ENCODE measurements at regions of chr2 and their contacts with region 1.

Region 1: GRCh38 chr2:39948016-39948719 is 169.1 kb upstream of the THUMPD2 start:
- DNase-seq: no peak
- ATAC-seq: peak; percentile 63
- H3K4me3 Mint-ChIP-seq: peak overlapping the region; percentile 0
- H3K27ac Mint-ChIP-seq: peak overlapping the region; percentile 91
- H3K4me1 Mint-ChIP-seq: peaks cover 49% of the 10 kb centered on the region
- H3K27me3 Mint-ChIP-seq: peaks cover 3% of the 10 kb centered on the region

Region 2: DNA sequence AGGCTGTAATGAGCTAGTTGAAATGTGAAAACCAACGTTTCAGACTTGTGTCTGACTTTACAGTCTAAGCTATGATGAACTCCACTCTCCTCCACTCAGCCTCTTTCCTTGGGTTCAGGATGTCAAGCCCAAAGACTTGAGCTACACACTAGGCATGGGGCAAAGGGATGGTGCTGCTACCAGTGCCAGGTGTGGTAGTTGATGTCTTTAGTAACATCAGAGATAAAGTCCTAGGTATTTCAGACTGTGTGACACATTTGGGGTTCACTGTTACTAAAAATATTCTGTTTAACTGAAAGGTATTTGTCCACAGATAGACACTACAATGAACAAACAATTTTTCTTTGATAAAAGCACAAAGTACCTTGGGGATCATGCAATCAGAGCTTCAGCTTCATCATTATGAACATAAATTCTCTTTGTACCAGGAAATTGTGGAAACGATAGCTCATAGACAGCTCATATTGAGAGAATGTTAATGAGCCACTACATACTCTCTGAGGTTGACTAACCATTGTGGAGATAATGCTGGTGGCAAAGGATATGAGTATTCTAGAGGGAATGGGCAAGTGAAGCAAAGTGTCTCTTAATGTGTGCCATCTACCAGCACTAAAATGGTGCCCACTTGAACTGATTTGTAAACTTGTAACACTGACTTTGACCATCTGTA is 84.6 kb after region 1 on chr2:
- CTCF ChIA-PET with region 1: no interaction called
- POLR2A ChIA-PET with region 1: no interaction called
- intact Hi-C with region 1: loop called (anchors 5 kb)
- DNase-seq: no peak
- ATAC-seq: peak; percentile 92
- H3K4me3 Mint-ChIP-seq: no peak overlapping the region
- H3K27ac Mint-ChIP-seq: peak overlapping the region; percentile 74
- H3K4me1 Mint-ChIP-seq: peaks cover 22% of the 10 kb centered on the region
- H3K27me3 Mint-ChIP-seq: peaks cover 2% of the 10 kb centered on the region

Region 3: DNA sequence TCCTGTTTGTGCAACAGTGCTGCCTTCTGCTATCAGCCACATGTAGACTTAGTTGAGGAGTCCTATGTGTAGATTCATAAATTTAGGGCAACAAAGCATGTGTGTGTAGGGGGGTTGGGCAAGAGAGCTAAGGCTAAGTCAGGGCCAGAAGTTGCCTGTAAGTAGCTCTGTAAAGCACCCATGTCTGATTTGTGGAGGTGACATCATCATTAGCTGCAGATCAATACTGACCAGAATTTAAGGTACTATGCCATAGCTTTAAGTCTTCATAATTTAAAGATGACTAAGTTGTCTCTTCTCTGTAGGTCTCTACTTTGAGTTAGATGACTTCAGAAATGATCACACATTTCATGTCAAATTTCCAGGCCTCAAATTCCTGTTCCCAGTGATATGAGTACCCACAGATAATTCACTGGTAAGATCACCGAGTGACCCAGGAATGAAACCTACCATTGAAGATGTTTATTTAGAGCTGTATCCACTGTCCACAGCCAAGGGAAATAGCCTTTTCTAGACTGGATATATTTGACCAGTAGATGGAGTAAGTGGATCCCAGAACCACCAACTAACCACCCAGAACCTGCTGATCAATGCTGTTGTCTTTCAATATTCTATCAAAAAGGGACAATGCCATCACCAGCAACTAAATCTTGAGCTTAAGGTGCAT is 264.8 kb after region 1 on chr2:
- CTCF ChIA-PET with region 1: no interaction called
- POLR2A ChIA-PET with region 1: no interaction called
- intact Hi-C with region 1: loop called (anchors 2 to 5 kb)
- DNase-seq: no peak
- ATAC-seq: no peak
- H3K4me3 Mint-ChIP-seq: no peak overlapping the region
- H3K27ac Mint-ChIP-seq: peak overlapping the region; percentile 14
- H3K4me1 Mint-ChIP-seq: peaks cover 26% of the 10 kb centered on the region
- H3K27me3 Mint-ChIP-seq: no peaks in the 10 kb centered on the region

Region 4: DNA sequence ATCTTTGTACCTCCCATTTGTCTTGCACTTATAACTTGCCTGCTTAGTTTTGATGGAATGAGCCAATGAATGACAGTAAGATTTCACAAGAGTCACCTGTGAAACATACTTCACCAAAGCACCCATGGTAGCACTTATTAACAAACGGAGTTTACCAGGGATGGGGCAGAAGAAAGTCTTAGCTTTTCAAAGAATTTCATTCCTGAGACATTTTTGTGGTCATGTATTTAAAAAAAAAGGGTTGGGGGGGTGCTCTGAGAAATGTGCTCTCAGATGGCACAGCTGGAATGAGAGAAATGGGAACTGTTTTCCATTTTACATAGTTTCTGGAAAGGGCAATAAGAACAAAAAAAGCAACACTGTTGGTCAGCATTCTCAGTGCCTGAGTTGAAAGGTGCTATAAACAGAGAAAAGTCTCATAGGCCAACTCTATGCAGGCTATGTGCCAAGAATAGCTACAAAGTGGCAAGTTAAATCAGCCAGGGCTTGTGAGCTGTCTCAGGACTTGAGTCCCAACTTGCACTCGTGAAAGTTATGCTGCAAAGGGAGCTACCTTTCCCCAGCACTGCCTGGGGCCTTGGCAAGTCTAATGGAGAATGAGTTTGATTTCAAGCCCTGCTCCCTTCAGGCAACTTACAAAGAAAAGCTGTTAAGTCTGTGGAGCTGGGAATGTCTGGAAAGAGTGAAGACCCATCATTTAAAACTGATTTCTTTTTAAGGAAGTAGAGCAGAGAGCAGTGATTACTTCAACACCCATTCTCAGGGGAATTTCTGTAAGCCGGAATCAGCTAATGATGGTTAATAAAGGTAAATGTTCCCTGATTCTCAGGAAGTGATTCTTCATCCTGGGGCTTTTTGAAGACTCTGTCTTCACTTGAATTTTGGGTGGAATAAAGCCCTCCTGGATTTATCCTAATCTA is 333.1 kb after region 1 on chr2:
- CTCF ChIA-PET with region 1: no interaction called
- POLR2A ChIA-PET with region 1: no interaction called
- intact Hi-C with region 1: no loop called
- DNase-seq: no peak
- ATAC-seq: no peak
- H3K4me3 Mint-ChIP-seq: no peak overlapping the region
- H3K27ac Mint-ChIP-seq: no peak overlapping the region
- H3K4me1 Mint-ChIP-seq: no peaks in the 10 kb centered on the region
- H3K27me3 Mint-ChIP-seq: no peaks in the 10 kb centered on the region